ENCODE measurements at regions of chr7 and their contacts with region 1.

Region 1: GRCh38 chr7:107168233-107169119 is at the start of gene HBP1:
- DNase-seq: peak; percentile 96 to 100 (median 98)
- ATAC-seq: peak; percentile 89
- H3K4me3 ChIP-seq: peak within 1 kb of the TSS; percentile 74
- H3K27ac ChIP-seq: peak within 1 kb of the TSS; percentile 93
- H3K4me1 ChIP-seq: peaks cover 5 to 21% of the 10 kb centered on the region in 2 experiments
- H3K27me3 ChIP-seq: no peaks in the 10 kb centered on the region
- CTCF ChIP-seq: 0 out of 6 replicates have a peak, but pooled peaks of 1 of the 3 experiments have one; percentile 10
- EP300 ChIP-seq: no peak; the same call in 1 of the 2 replicates
- POLR2A ChIP-seq: peak; percentile 72
- RAD21 ChIP-seq: no peak
- polyA plus RNA-seq, gene HBP1: 37.9 to 44.9 TPM

Region 2: GRCh38 chr7:106793015-106793975 is 375.2 kb before region 1 on chr7:
- CTCF ChIA-PET with region 1: no interaction called
- POLR2A ChIA-PET with region 1: interaction called, 3 read pairs
- in situ Hi-C with region 1: no loop called
- intact Hi-C with region 1: loop called (anchors 5 kb)
- DNase-seq: peak; percentile 59 to 78 (median 63)
- ATAC-seq: peak; percentile 53
- H3K4me3 ChIP-seq: no peak overlapping the region
- H3K27ac ChIP-seq: no peak overlapping the region
- H3K4me1 ChIP-seq: peaks cover 0 to 5% of the 10 kb centered on the region in 2 experiments; a peak in 1 of 5 replicates
- H3K27me3 ChIP-seq: no peaks in the 10 kb centered on the region
- CTCF ChIP-seq: peak; percentile 59 to 93 (median 74); a peak in 5 of 6 replicates
- EP300 ChIP-seq: no peak
- POLR2A ChIP-seq: no peak
- RAD21 ChIP-seq: peak; percentile 91 to 94

Region 3: GRCh38 chr7:106865130-106866041 is 303.1 kb before region 1 on chr7 and contains the start of gene PIK3CG:
- CTCF ChIA-PET with region 1: no interaction called
- POLR2A ChIA-PET with region 1: interaction called, 4 read pairs
- in situ Hi-C with region 1: no loop called
- intact Hi-C with region 1: loop called (anchors 5 kb)
- DNase-seq: peak in 2 of 4 experiments; percentile 65 to 67
- ATAC-seq: peak; percentile 52
- H3K4me3 ChIP-seq: peak within 1 kb of the TSS; percentile 48
- H3K27ac ChIP-seq: peak within 1 kb of the TSS; percentile 79
- H3K4me1 ChIP-seq: peaks cover 15 to 53% of the 10 kb centered on the region in 2 experiments
- H3K27me3 ChIP-seq: no peaks in the 10 kb centered on the region
- CTCF ChIP-seq: no peak; a peak in 1 of 6 replicates
- EP300 ChIP-seq: peak; percentile 54
- POLR2A ChIP-seq: peak; percentile 74
- RAD21 ChIP-seq: no peak
- polyA plus RNA-seq, gene PIK3CG: 5.3 to 6.2 TPM

Region 4: DNA sequence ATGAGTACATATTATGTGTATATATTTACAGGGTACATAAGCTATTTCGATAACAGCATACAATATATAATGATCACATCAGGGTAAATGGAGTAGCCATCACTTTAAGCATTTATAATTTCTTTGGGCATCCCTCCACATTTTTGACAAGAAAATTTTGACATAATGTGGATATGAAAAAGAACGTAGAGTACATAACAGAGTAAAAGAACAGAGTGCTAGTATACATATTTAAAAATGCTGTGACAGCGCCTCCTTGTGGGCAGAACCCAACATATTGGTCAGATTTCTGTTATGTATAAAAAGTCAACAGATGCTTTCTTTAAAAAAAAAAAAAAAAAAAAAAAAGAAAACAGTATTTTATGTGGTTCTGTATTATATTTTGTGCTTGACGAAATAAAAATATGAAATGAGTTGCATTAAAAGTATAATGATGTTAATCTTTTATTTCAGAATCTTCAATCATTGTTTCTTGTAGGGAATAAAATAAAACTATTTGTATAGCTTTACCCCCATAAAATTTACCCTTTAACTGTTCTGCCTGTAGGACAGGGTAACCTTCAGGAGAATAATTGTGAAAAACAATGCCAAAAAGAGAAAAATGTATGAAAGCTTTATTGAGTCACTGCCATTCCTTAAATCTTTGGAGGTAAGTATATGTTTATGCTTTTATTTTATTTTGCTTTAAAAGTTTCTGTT is 18.0 kb before region 1 on chr7:
- CTCF ChIA-PET with region 1: interaction called, 7 read pairs
- POLR2A ChIA-PET with region 1: interaction called, 14 read pairs
- in situ Hi-C with region 1: no loop called
- intact Hi-C with region 1: no loop called
- DNase-seq: peak; percentile 62 to 91 (median 63)
- ATAC-seq: peak; percentile 87
- H3K4me3 ChIP-seq: no peak overlapping the region
- H3K27ac ChIP-seq: peak overlapping the region; percentile 9; the same call in 1 of the 3 replicates
- H3K4me1 ChIP-seq: no peaks in the 10 kb centered on the region
- H3K27me3 ChIP-seq: no peaks in the 10 kb centered on the region
- CTCF ChIP-seq: peak; percentile 64 to 95 (median 67); a peak in 4 of 6 replicates
- EP300 ChIP-seq: no peak
- POLR2A ChIP-seq: no peak
- RAD21 ChIP-seq: peak; percentile 95 to 96

Region 5: GRCh38 chr7:107180378-107180777 is 11.9 kb after region 1 on chr7:
- CTCF ChIA-PET with region 1: no interaction called
- POLR2A ChIA-PET with region 1: interaction called, 35 read pairs
- in situ Hi-C with region 1: no loop called
- intact Hi-C with region 1: no loop called
- DNase-seq: peak in 2 of 4 experiments; percentile 30 to 72
- ATAC-seq: peak; percentile 50
- H3K4me3 ChIP-seq: no peak overlapping the region
- H3K27ac ChIP-seq: no peak overlapping the region; the same call in 2 of the 3 replicates
- H3K4me1 ChIP-seq: peaks cover 0 to 5% of the 10 kb centered on the region in 2 experiments; a peak in 2 of 5 replicates
- H3K27me3 ChIP-seq: no peaks in the 10 kb centered on the region
- CTCF ChIP-seq: no peak
- EP300 ChIP-seq: no peak
- POLR2A ChIP-seq: no peak
- RAD21 ChIP-seq: no peak

Region 6: DNA sequence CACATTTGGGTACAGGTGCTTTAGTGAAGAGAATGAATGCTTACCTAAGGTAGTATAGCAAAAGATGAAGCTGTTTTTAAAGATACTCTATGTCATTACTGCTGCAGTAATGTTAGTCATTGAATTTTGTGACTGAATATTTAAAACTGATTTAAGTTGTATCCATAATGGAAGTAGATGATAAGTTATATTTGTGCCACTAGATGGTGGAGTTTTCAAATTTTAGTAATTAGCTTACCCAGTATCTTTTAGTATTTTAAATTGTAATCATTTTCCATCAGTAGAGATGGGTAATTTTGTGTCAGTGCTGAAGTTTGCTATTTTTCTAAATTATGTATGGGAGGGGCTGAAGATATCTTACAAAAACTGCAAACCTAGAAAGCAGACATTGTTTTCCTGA is 25.6 kb after region 1 on chr7:
- CTCF ChIA-PET with region 1: no interaction called
- POLR2A ChIA-PET with region 1: interaction called, 15 read pairs
- in situ Hi-C with region 1: no loop called
- intact Hi-C with region 1: no loop called
- DNase-seq: no peak
- ATAC-seq: no peak
- H3K4me3 ChIP-seq: no peak overlapping the region
- H3K27ac ChIP-seq: no peak overlapping the region
- H3K4me1 ChIP-seq: no peaks in the 10 kb centered on the region
- H3K27me3 ChIP-seq: no peaks in the 10 kb centered on the region
- CTCF ChIP-seq: peak in 1 of 3 experiments; percentile 24; a peak in 1 of 6 replicates
- EP300 ChIP-seq: no peak
- POLR2A ChIP-seq: 0 out of 2 replicates have a peak, but pooled peaks have one; percentile 36
- RAD21 ChIP-seq: peak in 1 of 2 experiments; percentile 28; a peak in 2 of 4 replicates

Region 7: GRCh38 chr7:107355616-107356015 is 187.1 kb after region 1 on chr7:
- CTCF ChIA-PET with region 1: no interaction called
- POLR2A ChIA-PET with region 1: no interaction called
- in situ Hi-C with region 1: no loop called
- intact Hi-C with region 1: no loop called
- DNase-seq: no peak
- ATAC-seq: no peak
- H3K4me3 ChIP-seq: no peak overlapping the region
- H3K27ac ChIP-seq: no peak overlapping the region
- H3K4me1 ChIP-seq: no peaks in the 10 kb centered on the region
- H3K27me3 ChIP-seq: no peaks in the 10 kb centered on the region
- CTCF ChIP-seq: no peak
- EP300 ChIP-seq: no peak
- POLR2A ChIP-seq: no peak
- RAD21 ChIP-seq: no peak

Region 8: GRCh38 chr7:107743567-107744344 is 575.3 kb after region 1 on chr7 and contains the start of gene CBLL1:
- CTCF ChIA-PET with region 1: no interaction called
- POLR2A ChIA-PET with region 1: interaction called, 12 read pairs
- in situ Hi-C with region 1: no loop called
- intact Hi-C with region 1: no loop called
- DNase-seq: peak; percentile 95 to 99 (median 96)
- ATAC-seq: peak; percentile 97
- H3K4me3 ChIP-seq: peak within 1 kb of the TSS; percentile 93
- H3K27ac ChIP-seq: peak within 1 kb of the TSS; percentile 100
- H3K4me1 ChIP-seq: peaks cover 3 to 21% of the 10 kb centered on the region in 2 experiments
- H3K27me3 ChIP-seq: no peaks in the 10 kb centered on the region
- CTCF ChIP-seq: peak; percentile 96 to 98 (median 97)
- EP300 ChIP-seq: peak; percentile 78; the same call in 1 of the 2 replicates
- POLR2A ChIP-seq: peak; percentile 99
- RAD21 ChIP-seq: peak; percentile 81 to 96
- polyA plus RNA-seq, gene CBLL1: 17.4 to 35.4 TPM